ENCODE measurements at regions of chr11 and their contacts with region 1.

Region 1: GRCh38 chr11:66480117-66480938 is at the start of gene DPP3:
- DNase-seq: peak; percentile 98
- ATAC-seq: peak; percentile 98
- H3K4me3 Mint-ChIP-seq: peak within 1 kb of the TSS; percentile 90
- H3K27ac Mint-ChIP-seq: peak within 1 kb of the TSS; percentile 86
- H3K4me1 Mint-ChIP-seq: peaks cover 22% of the 10 kb centered on the region
- H3K27me3 Mint-ChIP-seq: no peaks in the 10 kb centered on the region
- total RNA-seq, gene DPP3: 87.1 to 91.9 TPM

Region 2: GRCh38 chr11:66344550-66345315 is 135.6 kb before region 1 on chr11 and contains the start of gene BRMS1:
- CTCF ChIA-PET with region 1: no interaction called
- POLR2A ChIA-PET with region 1: no interaction called
- intact Hi-C with region 1: loop called in 1 of 2 experiments (anchors 1 kb)
- DNase-seq: peak; percentile 98
- ATAC-seq: peak; percentile 80
- H3K4me3 Mint-ChIP-seq: peak within 1 kb of the TSS; percentile 93
- H3K27ac Mint-ChIP-seq: peak within 1 kb of the TSS; percentile 90
- H3K4me1 Mint-ChIP-seq: peaks cover 45% of the 10 kb centered on the region
- H3K27me3 Mint-ChIP-seq: peaks cover 3% of the 10 kb centered on the region
- total RNA-seq, gene BRMS1: 29.2 to 30.2 TPM

Region 3: GRCh38 chr11:66421492-66422205 is 58.7 kb before region 1 on chr11:
- CTCF ChIA-PET with region 1: interaction called, 7 read pairs
- POLR2A ChIA-PET with region 1: interaction called, 5 read pairs
- intact Hi-C with region 1: loop called in 1 of 2 experiments (anchors 1 kb)
- DNase-seq: peak; percentile 93
- ATAC-seq: peak; percentile 40
- H3K4me3 Mint-ChIP-seq: no peak overlapping the region
- H3K27ac Mint-ChIP-seq: no peak overlapping the region
- H3K4me1 Mint-ChIP-seq: peaks cover 30% of the 10 kb centered on the region
- H3K27me3 Mint-ChIP-seq: peaks cover 35% of the 10 kb centered on the region

Region 4: DNA sequence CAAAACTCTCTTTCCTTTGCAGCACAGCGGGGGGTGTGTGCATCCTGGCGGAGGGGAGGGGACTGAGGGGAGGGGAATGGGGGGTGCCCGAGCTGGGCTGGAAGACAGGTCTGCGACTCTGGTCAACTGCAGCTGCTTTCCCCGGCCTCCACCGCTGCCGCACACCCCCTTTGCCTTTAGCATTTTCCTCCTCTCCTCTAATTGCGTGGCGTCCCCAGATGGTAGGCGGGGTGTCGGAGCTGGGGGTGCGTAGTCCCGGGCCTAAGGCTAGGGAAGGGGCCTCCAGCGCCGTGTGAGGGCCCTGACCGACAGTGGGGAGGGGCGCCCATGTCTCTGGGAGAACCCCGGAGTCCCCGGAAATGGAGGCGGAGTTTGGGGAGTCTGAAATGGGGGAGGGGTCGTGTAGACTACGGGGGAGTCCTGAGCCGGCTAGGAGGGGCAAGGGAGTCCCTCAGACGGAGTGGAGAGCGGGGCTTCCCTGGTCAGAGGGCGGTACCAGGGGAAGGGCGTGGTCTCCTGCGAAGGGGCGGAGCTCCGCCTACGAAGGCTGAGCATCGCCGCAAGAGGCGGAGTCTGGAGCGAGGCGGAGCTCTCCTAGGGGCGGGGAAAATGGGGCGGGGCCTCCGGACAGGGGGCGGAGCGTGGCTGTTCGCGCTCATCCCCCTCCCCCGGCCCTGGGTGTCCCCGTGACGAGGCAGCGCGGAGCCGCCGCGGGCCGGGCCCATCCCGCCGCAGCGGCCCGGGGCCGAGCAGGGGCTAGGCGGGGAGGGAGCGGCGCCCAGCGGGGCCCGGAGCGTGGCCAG is 13.9 kb before region 1 on chr11 and contains the start of gene PELI3:
- CTCF ChIA-PET with region 1: interaction called, 37 read pairs
- POLR2A ChIA-PET with region 1: interaction called, 14 read pairs
- intact Hi-C with region 1: loop called (anchors 1 kb)
- DNase-seq: peak; percentile 98
- ATAC-seq: peak; percentile 88
- H3K4me3 Mint-ChIP-seq: peak within 1 kb of the TSS; percentile 85
- H3K27ac Mint-ChIP-seq: peak within 1 kb of the TSS; percentile 79
- H3K4me1 Mint-ChIP-seq: peaks cover 38% of the 10 kb centered on the region
- H3K27me3 Mint-ChIP-seq: no peaks in the 10 kb centered on the region
- total RNA-seq, gene PELI3: 5.7 to 7.0 TPM

Region 5: DNA sequence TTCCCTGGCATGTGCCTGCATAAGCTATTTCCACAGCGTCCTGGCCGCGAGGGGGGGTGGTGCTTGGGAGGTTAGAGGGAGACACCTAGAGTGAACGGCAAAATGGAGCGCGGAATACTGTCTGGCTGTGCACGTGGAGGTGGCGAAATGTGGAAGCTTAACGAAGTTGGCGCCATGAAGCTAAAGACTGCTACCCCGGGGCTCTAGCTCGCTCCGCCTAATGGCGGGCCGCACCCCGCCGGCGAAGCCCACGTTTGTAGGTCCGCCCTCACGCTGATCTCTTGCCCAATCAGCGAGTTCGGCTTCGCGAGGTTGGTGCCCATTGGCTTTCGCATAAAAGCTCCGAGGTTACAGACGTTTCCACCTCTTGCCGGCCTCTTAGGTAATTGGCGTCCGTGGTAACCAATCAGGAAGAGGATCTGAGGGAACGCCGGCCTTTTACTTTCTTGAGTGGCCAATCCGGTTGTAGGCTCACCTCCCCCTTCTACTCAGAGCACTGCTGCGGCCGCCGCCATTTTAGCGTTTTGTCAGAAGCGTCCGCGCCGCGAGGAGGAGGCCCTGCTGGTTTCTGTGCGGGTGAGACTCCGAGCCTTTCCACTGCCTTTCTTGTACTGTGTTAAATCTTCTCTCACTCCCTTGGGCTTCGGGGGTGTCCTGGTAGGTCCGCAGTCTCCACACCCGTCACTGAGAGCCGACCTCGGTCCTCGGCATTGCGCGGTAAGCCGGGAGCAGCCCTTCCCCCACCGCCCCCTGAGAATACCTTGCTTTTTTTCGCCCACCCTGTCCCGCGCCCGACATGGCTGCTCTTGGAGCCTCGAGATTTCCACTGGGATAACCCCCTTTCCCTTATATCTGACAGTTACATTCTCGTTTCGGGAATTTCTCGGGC is 158.1 kb after region 1 on chr11 and contains the start of gene RBM4:
- CTCF ChIA-PET with region 1: interaction called, 3 read pairs
- POLR2A ChIA-PET with region 1: interaction called, 3 read pairs
- intact Hi-C with region 1: loop called in 1 of 2 experiments (anchors 1 kb)
- DNase-seq: peak; percentile 97
- ATAC-seq: peak; percentile 95
- H3K4me3 Mint-ChIP-seq: peak within 1 kb of the TSS; percentile 89
- H3K27ac Mint-ChIP-seq: peak within 1 kb of the TSS; percentile 97
- H3K4me1 Mint-ChIP-seq: peaks cover 65% of the 10 kb centered on the region
- H3K27me3 Mint-ChIP-seq: no peaks in the 10 kb centered on the region
- total RNA-seq, gene RBM4: 104 to 122 TPM

Measured in activated CD4-positive, alpha-beta T cell treated with anti-CD3 and anti-CD28 coated beads for 36 hours (primary cell).